Sciatic nerve (tissue), 2 donors: ENCODE measurements at regions of chr1 and their contacts with region 1.

Region 1: GRCh38 chr1:186865253-186865652 is 36.5 kb downstream of the PLA2G4A start:
- DNase-seq: no peak
- ATAC-seq: no peak

Region 2: DNA sequence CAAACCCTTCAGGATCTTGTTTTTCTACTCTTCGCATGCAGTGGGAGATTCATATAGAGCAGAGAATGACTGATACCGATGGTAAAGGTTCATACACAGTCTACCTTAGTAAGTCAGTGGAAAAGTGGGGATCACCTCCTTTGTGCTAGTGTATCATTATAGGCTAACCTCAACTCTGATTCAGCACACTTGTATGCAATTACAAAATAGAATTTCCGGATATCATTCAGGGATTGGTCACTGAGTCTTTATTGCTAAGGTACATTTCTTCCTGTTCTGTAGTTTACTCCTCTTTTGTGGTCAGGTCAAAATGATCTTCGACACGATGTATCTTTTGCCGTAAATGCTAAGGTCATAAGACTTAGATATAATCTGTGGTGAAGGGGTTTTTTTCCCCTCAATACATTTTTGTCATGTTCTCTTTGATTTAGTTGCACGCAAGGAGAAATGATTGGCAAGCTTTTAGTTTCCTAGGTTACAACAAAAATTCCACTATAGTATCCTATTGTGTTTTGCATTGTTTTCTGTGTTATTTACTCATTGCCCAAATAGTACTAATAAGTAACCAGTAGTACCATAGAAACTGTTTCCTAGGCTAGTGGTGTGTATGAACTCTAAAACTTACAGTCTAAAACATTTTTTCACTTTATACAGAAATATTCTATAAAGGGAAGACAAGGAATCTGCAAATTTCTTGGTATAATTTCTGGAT is 72.2 kb before region 1 on chr1:
- intact Hi-C with region 1: loop called (anchors 5 kb)
- DNase-seq: no peak
- ATAC-seq: no peak